Dorsolateral prefrontal cortex (tissue), 120 donors: ENCODE measurements at regions of chr1 and their contacts with region 1.

Region 1: GRCh38 chr1:147494998-147495580 is 46.2 kb upstream of the BCL9 start:
- DNase-seq: peak; percentile 40 to 81 (median 76)
- H3K4me3 ChIP-seq: peak overlapping the region in 9 of 59 donors; percentile 13 to 41 (median 31)
- H3K27ac ChIP-seq: no peak overlapping the region
- H3K27me3 ChIP-seq: no peaks in the 10 kb centered on the region
- CTCF ChIP-seq: peak; percentile 49 to 99 (median 92)

Region 2: DNA sequence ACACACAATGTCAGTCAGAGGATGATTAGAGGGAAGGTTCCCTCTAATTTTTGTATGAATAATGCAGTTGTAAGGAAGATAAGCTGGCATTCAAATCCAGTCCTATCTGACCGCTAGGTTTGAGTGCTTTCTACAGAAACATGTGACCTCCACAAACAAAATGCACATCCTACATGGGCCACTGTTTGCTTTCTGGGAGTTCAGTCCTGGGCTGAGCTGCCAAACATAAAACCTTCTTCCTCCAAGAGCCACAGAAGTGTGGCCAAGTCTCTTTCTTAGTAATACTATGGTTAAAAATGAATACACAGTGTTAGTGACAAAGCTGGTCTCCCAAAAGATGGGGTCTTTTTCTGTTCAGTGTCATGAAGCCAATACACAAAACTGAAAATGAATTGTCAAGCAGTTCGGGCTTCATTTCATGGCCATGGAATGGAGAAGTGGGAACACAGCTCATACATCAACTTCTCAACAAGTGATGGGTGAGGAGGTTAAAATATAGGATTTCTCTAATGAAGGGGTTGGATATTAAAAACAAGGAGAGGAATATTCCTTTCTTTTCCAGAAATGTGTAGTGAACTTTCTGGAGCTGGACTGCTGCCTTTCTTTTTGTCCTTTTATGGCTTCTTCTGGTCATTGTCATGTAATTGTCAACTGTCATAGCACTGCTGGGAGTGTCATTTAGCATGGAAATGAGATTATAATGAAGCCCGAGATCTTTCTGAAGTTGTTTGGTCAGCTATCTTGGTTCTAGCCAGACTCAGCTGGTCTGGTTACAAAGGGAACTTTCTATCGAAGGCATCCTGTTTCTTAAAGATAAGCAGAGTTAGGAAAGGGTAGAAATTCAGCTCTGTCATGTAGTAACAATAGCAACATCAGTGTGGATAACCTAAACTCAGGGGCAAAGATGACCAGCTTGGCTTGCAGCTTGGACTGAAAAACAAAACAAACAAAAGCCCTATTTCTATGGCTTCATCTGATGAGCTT is 117.5 kb before region 1 on chr1:
- intact Hi-C with region 1: no loop called
- DNase-seq: no peak
- H3K4me3 ChIP-seq: no peak overlapping the region
- H3K27ac ChIP-seq: no peak overlapping the region
- H3K27me3 ChIP-seq: peaks cover 0 to 4% (median 0%) of the 10 kb centered on the region in 45 donors
- CTCF ChIP-seq: no peak

Region 3: DNA sequence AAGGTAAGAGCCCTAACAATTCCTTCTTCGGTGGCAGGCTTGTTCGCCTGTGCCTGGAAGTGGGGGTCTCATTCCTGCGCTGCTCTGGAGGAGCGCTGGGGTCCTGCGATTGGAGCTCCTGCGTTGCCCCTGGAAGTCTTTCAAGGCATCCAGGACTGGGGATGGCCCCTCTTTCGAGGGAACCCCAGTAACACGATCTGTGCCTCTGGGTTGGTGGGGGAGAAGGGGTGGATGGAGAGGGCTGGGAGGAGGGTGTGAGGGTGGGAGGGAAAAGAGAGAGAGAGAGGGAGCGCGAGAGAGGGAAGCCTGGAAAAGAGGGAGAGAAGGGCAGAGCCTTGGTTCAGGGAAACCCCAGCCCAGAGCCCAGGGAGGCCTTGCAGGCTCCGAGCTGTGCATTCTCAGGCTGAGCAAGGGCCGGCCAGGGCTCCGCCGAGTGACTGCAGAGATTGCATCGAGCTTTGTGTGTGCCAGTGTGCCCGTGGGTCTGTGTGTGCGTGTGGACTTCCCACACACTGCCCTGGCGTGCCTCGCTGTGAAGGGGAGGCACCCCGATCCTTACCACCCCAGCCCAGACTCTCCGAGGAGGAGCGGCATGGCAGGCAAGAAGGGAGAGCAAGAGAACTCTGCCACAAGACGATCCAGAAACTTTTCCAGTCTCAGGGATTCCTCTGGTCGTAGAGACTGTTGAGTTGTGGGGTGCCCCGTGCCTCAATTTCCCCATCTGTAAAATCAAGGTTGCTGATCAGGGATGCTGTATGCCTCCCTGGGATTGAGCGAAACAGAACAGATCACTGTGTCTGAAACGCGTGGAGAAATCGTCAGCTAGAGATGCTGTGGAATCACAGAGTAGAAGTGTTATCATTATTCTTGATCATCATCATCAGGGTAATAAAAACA is 46.8 kb after region 1 on chr1:
- intact Hi-C with region 1: loop called (anchors 5 kb)
- DNase-seq: peak; percentile 42 to 74 (median 60)
- H3K4me3 ChIP-seq: peak overlapping the region; percentile 54 to 88 (median 74)
- H3K27ac ChIP-seq: peak overlapping the region; percentile 68 to 97 (median 94)
- H3K27me3 ChIP-seq: no peaks in the 10 kb centered on the region
- CTCF ChIP-seq: peak in 2 of 56 donors; percentile 6

Region 4: DNA sequence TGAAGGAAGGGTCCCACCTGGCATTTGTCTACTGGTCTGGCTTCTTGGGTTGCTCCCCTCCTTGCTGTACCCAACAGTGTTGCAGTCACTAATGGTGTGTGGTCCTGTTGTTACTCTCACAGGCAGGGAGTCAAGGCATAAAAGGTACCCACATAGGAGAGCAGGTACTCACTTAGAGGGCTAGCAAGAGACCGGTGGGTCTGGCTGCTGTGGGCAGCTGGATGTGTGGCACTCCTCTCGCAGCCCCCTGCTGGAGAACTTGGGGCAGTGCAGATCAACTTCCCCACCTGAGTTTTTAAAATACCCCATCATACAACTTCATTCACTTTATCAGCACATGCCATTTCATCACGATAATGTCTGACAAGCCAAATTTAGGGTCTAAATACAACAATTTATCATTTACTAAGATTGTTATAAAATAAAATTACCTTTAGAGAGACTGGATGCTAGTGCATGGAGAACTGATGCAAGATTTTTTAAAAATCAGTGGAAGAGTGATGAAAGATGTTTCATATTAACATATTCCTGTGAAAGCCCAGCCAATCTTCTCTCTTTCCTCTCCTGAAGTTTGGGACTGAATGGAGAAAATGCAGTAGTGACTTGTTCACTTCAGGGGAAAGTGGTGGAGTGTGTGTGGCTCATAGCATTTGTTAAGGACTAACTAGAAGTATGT is 132.5 kb after region 1 on chr1:
- intact Hi-C with region 1: loop called (anchors 2 to 5 kb)
- DNase-seq: peak in 5 of 10 donors; percentile 27 to 57 (median 36)
- H3K4me3 ChIP-seq: no peak overlapping the region
- H3K27ac ChIP-seq: no peak overlapping the region
- H3K27me3 ChIP-seq: no peaks in the 10 kb centered on the region
- CTCF ChIP-seq: peak; percentile 72 to 96 (median 88)

Region 5: DNA sequence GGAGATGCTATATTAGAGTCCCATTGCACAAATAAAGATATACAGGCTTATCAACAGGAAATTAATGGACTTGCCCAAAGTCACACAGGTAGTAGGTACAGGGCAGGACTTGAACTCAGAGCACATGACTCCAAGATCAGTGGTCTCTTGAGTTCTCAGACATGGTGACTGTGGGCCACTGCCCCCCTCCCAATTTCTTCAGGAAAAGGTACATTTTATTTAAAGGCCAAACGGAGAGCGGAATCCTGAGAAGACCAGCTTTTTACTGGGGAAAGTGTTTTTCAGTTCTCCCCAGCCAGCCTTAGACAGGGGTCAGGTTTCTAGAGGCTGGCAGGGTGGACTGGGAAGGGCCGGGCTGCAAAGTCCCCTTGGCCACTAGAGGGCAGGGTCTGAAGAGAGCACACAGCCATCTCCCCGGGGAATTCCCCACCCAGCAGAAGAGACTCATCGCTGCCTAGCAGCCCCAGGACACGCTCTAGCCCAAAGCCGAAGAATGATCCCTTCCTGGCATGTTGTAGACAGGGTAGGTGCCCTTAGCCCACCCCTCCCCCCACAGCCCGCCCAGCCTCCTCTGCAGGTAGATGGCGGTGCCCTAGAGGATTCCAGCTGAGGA is 145.6 kb after region 1 on chr1:
- intact Hi-C with region 1: loop called in 1 of 2 experiments (anchors 5 kb)
- DNase-seq: peak in 6 of 10 donors; percentile 44 to 68 (median 52)
- H3K4me3 ChIP-seq: no peak overlapping the region
- H3K27ac ChIP-seq: peak overlapping the region in 3 of 59 donors; percentile 28 to 42 (median 36)
- H3K27me3 ChIP-seq: no peaks in the 10 kb centered on the region
- CTCF ChIP-seq: peak; percentile 22 to 85 (median 74)

Region 6: DNA sequence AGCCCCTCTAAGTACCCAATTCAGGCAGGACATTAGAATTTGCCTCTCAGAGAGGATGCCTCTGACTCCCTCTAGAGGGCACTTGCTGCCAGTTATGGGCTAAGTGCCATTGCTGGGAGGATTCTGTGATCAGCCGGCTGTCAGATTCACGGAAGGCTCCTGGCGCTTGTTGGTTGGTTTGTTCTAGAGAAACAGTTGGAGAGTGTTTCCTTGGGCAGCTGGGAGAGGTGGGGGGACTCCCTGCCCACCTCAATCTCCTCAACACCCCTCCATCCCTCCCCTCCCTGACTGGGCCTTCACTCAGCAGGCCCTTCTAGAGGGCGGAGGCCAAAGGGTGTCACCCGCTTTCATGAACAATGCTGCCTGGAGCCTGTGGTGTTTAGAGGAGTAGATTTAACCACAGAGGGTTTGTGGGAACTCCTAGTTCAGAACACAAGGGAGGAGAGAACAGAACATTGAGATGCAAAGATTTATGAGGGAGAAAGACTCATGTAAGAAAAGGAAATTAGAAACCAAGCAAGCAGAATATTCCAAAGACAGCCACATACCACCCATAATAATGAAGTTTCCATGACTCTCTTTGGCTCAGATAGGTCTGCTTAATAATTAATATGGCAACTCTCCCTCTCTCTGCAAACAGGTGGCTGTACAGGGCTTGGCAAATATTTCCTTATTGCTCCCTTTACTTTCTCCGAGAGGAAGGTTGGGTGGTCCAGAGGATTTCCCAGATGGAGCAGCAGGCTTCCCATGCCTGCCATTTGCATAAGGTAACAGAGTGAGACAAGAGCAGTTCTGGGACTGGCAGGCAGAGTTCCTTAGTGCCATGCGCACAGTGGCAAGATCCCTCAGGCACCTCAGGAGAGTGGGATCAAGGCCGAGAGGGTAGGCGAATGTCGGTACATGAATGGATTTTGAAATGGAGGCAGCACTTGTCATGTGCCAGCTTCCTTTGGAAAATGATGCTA is 205.2 kb after region 1 on chr1:
- intact Hi-C with region 1: loop called in 1 of 2 experiments (anchors 2 kb)
- DNase-seq: peak in 9 of 10 donors; percentile 36 to 71 (median 64)
- H3K4me3 ChIP-seq: peak overlapping the region in 22 of 59 donors; percentile 3 to 53 (median 20)
- H3K27ac ChIP-seq: peak overlapping the region in 31 of 59 donors; percentile 9 to 75 (median 43)
- H3K27me3 ChIP-seq: peaks cover 0 to 6% (median 0%) of the 10 kb centered on the region in 45 donors
- CTCF ChIP-seq: peak; percentile 38 to 87 (median 78)

Region 7: GRCh38 chr1:147890177-147890790 is 395.2 kb after region 1 on chr1:
- intact Hi-C with region 1: loop called (anchors 2 to 10 kb)
- DNase-seq: peak in 5 of 10 donors; percentile 12 to 54 (median 31)
- H3K4me3 ChIP-seq: no peak overlapping the region
- H3K27ac ChIP-seq: no peak overlapping the region
- H3K27me3 ChIP-seq: no peaks in the 10 kb centered on the region
- CTCF ChIP-seq: peak in 51 of 56 donors; percentile 16 to 68 (median 42)